ENCODE measurements at regions of chr12 and their contacts with region 1.

Region 1: DNA sequence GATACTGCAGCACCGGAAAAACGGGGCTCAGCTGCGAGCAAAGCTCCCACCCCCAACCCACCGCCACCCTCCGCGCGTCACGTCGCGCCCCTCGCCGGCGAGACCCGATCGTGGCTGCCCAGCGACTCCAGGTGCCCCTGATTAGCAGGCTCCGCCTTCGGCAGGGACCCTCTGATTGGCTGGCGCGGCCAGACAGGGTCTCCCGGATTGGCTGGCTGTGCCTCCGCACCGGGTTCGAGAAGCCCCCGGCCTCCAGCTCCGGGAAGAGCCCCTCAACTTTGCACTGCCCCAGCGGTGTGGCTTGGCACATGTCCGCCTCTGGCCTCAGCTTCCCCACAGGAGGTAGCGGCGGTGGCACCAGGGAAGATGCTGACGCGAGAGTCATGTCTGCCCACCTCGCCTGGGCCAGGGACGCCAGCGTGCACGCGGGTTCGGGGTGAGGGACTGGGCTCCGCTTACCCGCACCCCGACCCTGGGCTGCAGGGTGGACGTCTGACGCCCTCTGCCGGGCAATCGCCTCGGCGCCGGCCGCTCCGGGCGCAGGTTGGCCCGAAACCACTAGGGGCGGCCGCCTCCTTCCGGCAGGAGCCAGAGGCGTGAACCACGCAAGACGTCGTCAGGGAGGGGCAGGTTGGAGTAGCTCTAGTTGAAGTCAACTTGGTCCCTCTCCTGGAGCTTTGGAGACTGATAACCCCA is 498 bp upstream of the RHOF start:
- DNase-seq: peak; percentile 98
- ATAC-seq: peak; percentile 63
- H3K4me3 Mint-ChIP-seq: peak overlapping the region; percentile 96
- H3K27ac Mint-ChIP-seq: peak overlapping the region; percentile 92
- H3K4me1 Mint-ChIP-seq: peaks cover 56% of the 10 kb centered on the region
- H3K27me3 Mint-ChIP-seq: no peaks in the 10 kb centered on the region

Region 2: GRCh38 chr12:121399391-121400331 is 394.3 kb before region 1 on chr12 and contains the start of gene RNF34:
- CTCF ChIA-PET with region 1: no interaction called
- POLR2A ChIA-PET with region 1: no interaction called
- intact Hi-C with region 1: loop called in 1 of 2 experiments (anchors 2 kb)
- DNase-seq: peak; percentile 99
- ATAC-seq: peak; percentile 91
- H3K4me3 Mint-ChIP-seq: peak within 1 kb of the TSS; percentile 86
- H3K27ac Mint-ChIP-seq: peak within 1 kb of the TSS; percentile 93
- H3K4me1 Mint-ChIP-seq: peaks cover 33% of the 10 kb centered on the region
- H3K27me3 Mint-ChIP-seq: no peaks in the 10 kb centered on the region
- total RNA-seq, gene RNF34: 64.2 to 75.7 TPM

Region 3: DNA sequence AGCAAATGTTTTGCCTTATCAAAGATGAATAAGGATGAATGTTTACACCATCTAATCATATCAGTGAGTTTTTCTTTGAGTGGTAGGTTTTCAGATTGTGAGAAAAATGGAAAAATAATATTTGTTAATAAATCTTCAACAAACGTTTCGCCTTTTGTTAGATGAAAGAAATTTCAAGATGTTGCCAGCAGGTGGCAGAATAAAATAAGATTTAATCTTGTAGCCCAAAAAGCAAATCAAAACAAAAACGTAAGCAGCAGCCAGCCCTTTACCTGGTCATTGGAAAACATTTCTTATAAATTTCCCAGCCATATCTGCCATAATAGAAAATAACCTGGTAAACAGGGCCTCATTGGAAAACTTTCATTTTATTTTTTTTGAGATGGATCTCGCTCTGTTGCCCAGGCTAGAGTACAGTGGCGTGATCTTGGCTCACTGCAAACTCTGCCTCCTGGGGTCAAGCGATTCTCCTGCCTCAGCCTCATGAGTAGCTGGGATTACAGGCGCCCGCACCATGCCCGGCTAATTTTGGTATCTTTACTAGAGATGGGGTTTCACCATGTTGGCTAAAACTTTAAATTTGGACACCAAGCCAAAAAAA is 96.8 kb before region 1 on chr12:
- CTCF ChIA-PET with region 1: interaction called, 12 read pairs
- POLR2A ChIA-PET with region 1: no interaction called
- intact Hi-C with region 1: loop called (anchors 1 kb)
- DNase-seq: peak; percentile 27
- ATAC-seq: no peak
- H3K4me3 Mint-ChIP-seq: no peak overlapping the region
- H3K27ac Mint-ChIP-seq: no peak overlapping the region
- H3K4me1 Mint-ChIP-seq: no peaks in the 10 kb centered on the region
- H3K27me3 Mint-ChIP-seq: no peaks in the 10 kb centered on the region

Region 4: GRCh38 chr12:121781998-121782979 is 11.7 kb before region 1 on chr12:
- CTCF ChIA-PET with region 1: interaction called, 343 read pairs
- POLR2A ChIA-PET with region 1: interaction called, 28 read pairs
- intact Hi-C with region 1: loop called (anchors 1 kb)
- DNase-seq: peak; percentile 85
- ATAC-seq: peak; percentile 77
- H3K4me3 Mint-ChIP-seq: peak overlapping the region; percentile 68
- H3K27ac Mint-ChIP-seq: peak overlapping the region; percentile 96
- H3K4me1 Mint-ChIP-seq: peaks cover 74% of the 10 kb centered on the region
- H3K27me3 Mint-ChIP-seq: no peaks in the 10 kb centered on the region

Region 5: GRCh38 chr12:121888478-121889266 is 94.7 kb after region 1 on chr12 and contains the start of gene PSMD9:
- CTCF ChIA-PET with region 1: interaction called, 82 read pairs
- POLR2A ChIA-PET with region 1: interaction called, 5 read pairs
- intact Hi-C with region 1: loop called (anchors 1 kb)
- DNase-seq: peak; percentile 99
- ATAC-seq: peak; percentile 94
- H3K4me3 Mint-ChIP-seq: peak within 1 kb of the TSS; percentile 89
- H3K27ac Mint-ChIP-seq: peak within 1 kb of the TSS; percentile 98
- H3K4me1 Mint-ChIP-seq: peaks cover 33% of the 10 kb centered on the region
- H3K27me3 Mint-ChIP-seq: no peaks in the 10 kb centered on the region
- total RNA-seq, gene PSMD9: 50.4 to 56.2 TPM

Region 6: GRCh38 chr12:122225683-122226407 is 431.9 kb after region 1 on chr12 and contains the start of gene DIABLO:
- CTCF ChIA-PET with region 1: no interaction called
- POLR2A ChIA-PET with region 1: no interaction called
- intact Hi-C with region 1: loop called in 1 of 2 experiments (anchors 2 kb)
- DNase-seq: peak; percentile 100
- ATAC-seq: peak; percentile 98
- H3K4me3 Mint-ChIP-seq: peak within 1 kb of the TSS; percentile 92
- H3K27ac Mint-ChIP-seq: peak within 1 kb of the TSS; percentile 93
- H3K4me1 Mint-ChIP-seq: peaks cover 29% of the 10 kb centered on the region
- H3K27me3 Mint-ChIP-seq: no peaks in the 10 kb centered on the region
- total RNA-seq, gene DIABLO: 46.3 to 47.0 TPM